ENCODE measurements at regions of chr4 and their contacts with region 1.

Region 1: GRCh38 chr4:140756319-140757231 is at the start of gene TBC1D9:
- DNase-seq: peak; percentile 84 to 87
- H3K4me3 ChIP-seq: peak within 1 kb of the TSS; percentile 83
- H3K4me3 Mint-ChIP-seq: peak within 1 kb of the TSS; percentile 88
- H3K27ac Mint-ChIP-seq: peak within 1 kb of the TSS; percentile 53
- H3K4me1 ChIP-seq: peaks cover 7% of the 10 kb centered on the region
- H3K4me1 Mint-ChIP-seq: no peaks in the 10 kb centered on the region
- H3K27me3 ChIP-seq: no peaks in the 10 kb centered on the region
- H3K27me3 Mint-ChIP-seq: no peaks in the 10 kb centered on the region
- CTCF ChIP-seq: no peak
- total RNA-seq, gene TBC1D9: 12.5 and 13.6 TPM in 2 replicates

Region 2: DNA sequence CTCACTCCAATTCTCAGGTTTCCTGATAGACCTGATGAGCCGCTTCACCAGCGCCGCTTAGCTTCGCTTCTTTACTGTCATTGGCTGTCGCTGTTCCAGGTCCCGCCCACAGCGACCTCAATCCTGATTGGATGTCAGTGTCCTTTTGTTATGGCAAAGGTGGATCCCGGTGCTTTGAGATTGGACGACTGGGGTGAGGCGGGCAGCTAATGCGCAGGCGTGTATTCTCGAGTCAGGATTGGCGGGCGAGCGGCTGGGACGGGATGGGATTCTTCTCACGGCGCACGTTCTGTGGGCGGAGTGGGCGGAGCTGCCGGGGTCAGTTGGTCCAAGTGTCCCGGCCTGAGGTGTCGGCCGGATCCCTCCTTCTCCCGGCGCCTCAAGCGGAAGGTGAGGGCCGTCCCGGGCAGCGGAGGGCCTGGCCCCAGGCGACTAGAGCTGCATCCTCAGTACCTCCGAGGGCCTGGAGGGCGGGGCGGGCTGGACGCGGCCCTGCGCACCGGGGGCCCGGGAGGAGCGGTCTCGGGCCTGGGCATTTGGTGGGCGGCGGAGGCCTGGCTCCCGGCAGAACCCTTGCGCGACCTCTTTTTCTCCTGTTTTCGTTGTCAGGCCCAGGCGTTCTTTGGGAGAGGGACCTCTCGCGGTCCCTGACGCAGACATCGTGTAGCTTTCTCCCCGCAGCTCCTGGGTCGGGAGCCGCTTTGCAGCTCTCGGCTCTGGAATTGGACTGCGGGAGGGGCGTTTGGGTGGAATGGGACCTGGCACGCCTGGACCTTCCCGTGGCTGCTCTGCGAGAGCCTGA is 383.0 kb before region 1 on chr4 and contains the start of gene SCOC:
- CTCF ChIA-PET with region 1: no interaction called
- POLR2A ChIA-PET with region 1: no interaction called
- intact Hi-C with region 1: loop called (anchors 10 kb)
- DNase-seq: peak; percentile 98 to 99
- H3K4me3 ChIP-seq: peak within 1 kb of the TSS; percentile 90
- H3K4me3 Mint-ChIP-seq: no peak within 1 kb of the TSS
- H3K27ac Mint-ChIP-seq: no peak within 1 kb of the TSS
- H3K4me1 ChIP-seq: peaks cover 19% of the 10 kb centered on the region
- H3K4me1 Mint-ChIP-seq: peaks cover 7% of the 10 kb centered on the region
- H3K27me3 ChIP-seq: no peaks in the 10 kb centered on the region
- H3K27me3 Mint-ChIP-seq: no peaks in the 10 kb centered on the region
- CTCF ChIP-seq: no peak
- total RNA-seq, gene SCOC: 36.8 and 39.6 TPM in 2 replicates

Region 3: GRCh38 chr4:140615460-140615859 is 141.1 kb before region 1 on chr4:
- CTCF ChIA-PET with region 1: no interaction called
- POLR2A ChIA-PET with region 1: no interaction called
- intact Hi-C with region 1: loop called (anchors 2 kb)
- DNase-seq: peak in 1 of 2 experiments; percentile 29
- H3K4me3 ChIP-seq: no peak overlapping the region
- H3K4me3 Mint-ChIP-seq: no peak overlapping the region
- H3K27ac Mint-ChIP-seq: no peak overlapping the region
- H3K4me1 ChIP-seq: peaks cover 16% of the 10 kb centered on the region
- H3K4me1 Mint-ChIP-seq: no peaks in the 10 kb centered on the region
- H3K27me3 ChIP-seq: no peaks in the 10 kb centered on the region
- H3K27me3 Mint-ChIP-seq: no peaks in the 10 kb centered on the region
- CTCF ChIP-seq: no peak

Region 4: DNA sequence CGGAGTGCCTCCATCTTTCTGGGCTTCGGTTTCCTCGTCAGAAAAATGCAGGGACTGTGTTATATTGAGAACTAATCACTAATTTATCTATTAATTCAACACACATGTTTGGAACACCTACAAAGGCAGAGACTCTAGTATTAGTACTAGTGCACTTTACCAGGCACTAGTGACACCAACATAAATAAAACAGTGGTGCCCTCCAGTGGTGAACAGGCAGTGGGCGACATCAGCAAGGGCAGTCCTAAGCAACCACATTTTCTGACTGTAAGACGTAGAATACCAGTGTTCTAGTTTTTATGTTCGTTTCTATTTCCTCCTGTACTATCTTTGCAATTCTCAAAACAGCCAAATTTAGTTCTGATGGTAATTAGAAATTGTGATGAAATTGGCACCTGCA is 118.7 kb before region 1 on chr4:
- CTCF ChIA-PET with region 1: no interaction called
- POLR2A ChIA-PET with region 1: no interaction called
- intact Hi-C with region 1: loop called (anchors 10 kb)
- DNase-seq: peak in 1 of 2 experiments; percentile 19
- H3K4me3 ChIP-seq: no peak overlapping the region
- H3K4me3 Mint-ChIP-seq: no peak overlapping the region
- H3K27ac Mint-ChIP-seq: peak overlapping the region; percentile 14
- H3K4me1 ChIP-seq: peaks cover 48% of the 10 kb centered on the region
- H3K4me1 Mint-ChIP-seq: peaks cover 34% of the 10 kb centered on the region
- H3K27me3 ChIP-seq: no peaks in the 10 kb centered on the region
- H3K27me3 Mint-ChIP-seq: no peaks in the 10 kb centered on the region
- CTCF ChIP-seq: peak in 1 of 2 experiments; percentile 36

Region 5: GRCh38 chr4:140726776-140727500 is 29.6 kb before region 1 on chr4:
- CTCF ChIA-PET with region 1: no interaction called
- POLR2A ChIA-PET with region 1: no interaction called
- intact Hi-C with region 1: loop called (anchors 2 kb)
- DNase-seq: no peak
- H3K4me3 ChIP-seq: no peak overlapping the region
- H3K4me3 Mint-ChIP-seq: peak overlapping the region; percentile 22
- H3K27ac Mint-ChIP-seq: peak overlapping the region; percentile 87
- H3K4me1 ChIP-seq: peaks cover 46% of the 10 kb centered on the region
- H3K4me1 Mint-ChIP-seq: peaks cover 22% of the 10 kb centered on the region
- H3K27me3 ChIP-seq: no peaks in the 10 kb centered on the region
- H3K27me3 Mint-ChIP-seq: no peaks in the 10 kb centered on the region
- CTCF ChIP-seq: no peak

Region 6: GRCh38 chr4:140743194-140743931 is 13.2 kb before region 1 on chr4:
- CTCF ChIA-PET with region 1: interaction called, 16 read pairs
- POLR2A ChIA-PET with region 1: no interaction called
- intact Hi-C with region 1: loop called (anchors 1 kb)
- DNase-seq: peak in 1 of 2 experiments; percentile 27
- H3K4me3 ChIP-seq: no peak overlapping the region
- H3K4me3 Mint-ChIP-seq: no peak overlapping the region
- H3K27ac Mint-ChIP-seq: peak overlapping the region; percentile 67
- H3K4me1 ChIP-seq: peaks cover 44% of the 10 kb centered on the region
- H3K4me1 Mint-ChIP-seq: peaks cover 28% of the 10 kb centered on the region
- H3K27me3 ChIP-seq: no peaks in the 10 kb centered on the region
- H3K27me3 Mint-ChIP-seq: no peaks in the 10 kb centered on the region
- CTCF ChIP-seq: no peak

Region 7: GRCh38 chr4:140861359-140862176 is 105.0 kb after region 1 on chr4:
- CTCF ChIA-PET with region 1: no interaction called
- POLR2A ChIA-PET with region 1: no interaction called
- intact Hi-C with region 1: no loop called
- DNase-seq: peak; percentile 44 to 64
- H3K4me3 ChIP-seq: no peak overlapping the region
- H3K4me3 Mint-ChIP-seq: no peak overlapping the region
- H3K27ac Mint-ChIP-seq: no peak overlapping the region
- H3K4me1 ChIP-seq: no peaks in the 10 kb centered on the region
- H3K4me1 Mint-ChIP-seq: peaks cover 7% of the 10 kb centered on the region
- H3K27me3 ChIP-seq: no peaks in the 10 kb centered on the region
- H3K27me3 Mint-ChIP-seq: peaks cover 13% of the 10 kb centered on the region
- CTCF ChIP-seq: peak; percentile 62 to 70

Measured in Caco-2 (cell line).